ENCODE measurements at regions of chr6 and their contacts with region 1.

Region 1: GRCh38 chr6:75934643-75935472 is 137.6 kb downstream of the IMPG1 start:
- DNase-seq: peak; percentile 36
- ATAC-seq: peak; percentile 49
- H3K4me3 Mint-ChIP-seq: peak overlapping the region; percentile 0
- H3K27ac Mint-ChIP-seq: no peak overlapping the region
- H3K4me1 Mint-ChIP-seq: peaks cover 7% of the 10 kb centered on the region
- H3K27me3 Mint-ChIP-seq: peaks cover 20% of the 10 kb centered on the region

Region 2: GRCh38 chr6:75922226-75922625 is 12.6 kb before region 1 on chr6:
- CTCF ChIA-PET with region 1: no interaction called
- POLR2A ChIA-PET with region 1: no interaction called
- intact Hi-C with region 1: no loop called
- DNase-seq: no peak
- ATAC-seq: no peak
- H3K4me3 Mint-ChIP-seq: no peak overlapping the region
- H3K27ac Mint-ChIP-seq: no peak overlapping the region
- H3K4me1 Mint-ChIP-seq: no peaks in the 10 kb centered on the region
- H3K27me3 Mint-ChIP-seq: peaks cover 5% of the 10 kb centered on the region

Region 3: DNA sequence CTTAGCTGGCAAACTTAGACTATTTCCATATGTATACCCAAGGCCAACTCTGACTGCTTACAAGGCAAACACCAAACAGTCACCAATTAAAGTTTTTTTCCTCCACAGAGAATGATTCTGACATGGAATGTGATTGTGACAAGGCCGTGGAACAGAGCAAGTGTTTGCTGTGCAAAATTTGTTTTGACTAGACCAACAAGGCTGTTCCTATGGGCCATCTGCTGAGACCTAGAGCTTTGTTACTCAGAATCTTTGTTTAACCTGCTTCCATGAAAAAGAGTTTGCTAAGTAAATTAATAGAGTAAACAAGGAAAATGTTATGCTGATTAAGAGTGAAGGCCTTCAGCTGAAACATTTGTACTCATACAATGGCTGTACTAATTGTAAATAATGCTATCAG is 189.2 kb after region 1 on chr6:
- CTCF ChIA-PET with region 1: no interaction called
- POLR2A ChIA-PET with region 1: no interaction called
- intact Hi-C with region 1: no loop called
- DNase-seq: no peak
- ATAC-seq: no peak
- H3K4me3 Mint-ChIP-seq: no peak overlapping the region
- H3K27ac Mint-ChIP-seq: no peak overlapping the region
- H3K4me1 Mint-ChIP-seq: no peaks in the 10 kb centered on the region
- H3K27me3 Mint-ChIP-seq: no peaks in the 10 kb centered on the region

Region 4: GRCh38 chr6:76553256-76553655 is 618.4 kb after region 1 on chr6:
- CTCF ChIA-PET with region 1: no interaction called
- POLR2A ChIA-PET with region 1: no interaction called
- intact Hi-C with region 1: no loop called
- DNase-seq: no peak
- ATAC-seq: no peak
- H3K4me3 Mint-ChIP-seq: no peak overlapping the region
- H3K27ac Mint-ChIP-seq: no peak overlapping the region
- H3K4me1 Mint-ChIP-seq: no peaks in the 10 kb centered on the region
- H3K27me3 Mint-ChIP-seq: no peaks in the 10 kb centered on the region

Region 5: DNA sequence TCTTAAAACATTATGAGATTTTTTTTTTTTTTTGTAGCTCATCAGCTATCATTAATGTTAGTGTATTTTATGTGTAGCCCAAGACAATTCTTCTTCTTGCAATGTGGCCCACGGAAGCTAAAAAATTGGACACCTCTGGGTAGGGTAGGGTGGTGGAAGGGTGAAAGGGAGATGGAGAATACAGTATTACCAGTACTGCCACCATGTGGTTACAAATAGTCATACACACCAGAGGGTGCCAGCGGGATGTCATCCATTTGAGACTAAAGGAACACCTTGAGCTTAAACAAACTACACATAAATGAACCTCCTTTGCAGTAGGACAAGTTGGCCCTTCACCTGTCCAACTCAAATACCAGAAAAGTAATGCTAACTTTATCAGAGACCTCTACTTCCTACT is 926.5 kb after region 1 on chr6:
- CTCF ChIA-PET with region 1: interaction called, 3 read pairs
- POLR2A ChIA-PET with region 1: no interaction called
- intact Hi-C with region 1: loop called in 1 of 2 experiments (anchors 5 kb)
- DNase-seq: peak; percentile 7
- ATAC-seq: no peak
- H3K4me3 Mint-ChIP-seq: no peak overlapping the region
- H3K27ac Mint-ChIP-seq: no peak overlapping the region
- H3K4me1 Mint-ChIP-seq: no peaks in the 10 kb centered on the region
- H3K27me3 Mint-ChIP-seq: no peaks in the 10 kb centered on the region

Region 6: GRCh38 chr6:77457720-77458349 is 1523.0 kb after region 1 on chr6:
- CTCF ChIA-PET with region 1: interaction called, 4 read pairs
- POLR2A ChIA-PET with region 1: no interaction called
- intact Hi-C with region 1: loop called (anchors 1 to 5 kb)
- DNase-seq: peak; percentile 63
- ATAC-seq: no peak
- H3K4me3 Mint-ChIP-seq: no peak overlapping the region
- H3K27ac Mint-ChIP-seq: no peak overlapping the region
- H3K4me1 Mint-ChIP-seq: peaks cover 3% of the 10 kb centered on the region
- H3K27me3 Mint-ChIP-seq: peaks cover 18% of the 10 kb centered on the region